ENCODE measurements at regions of chr3 and their contacts with region 1.

Region 1: DNA sequence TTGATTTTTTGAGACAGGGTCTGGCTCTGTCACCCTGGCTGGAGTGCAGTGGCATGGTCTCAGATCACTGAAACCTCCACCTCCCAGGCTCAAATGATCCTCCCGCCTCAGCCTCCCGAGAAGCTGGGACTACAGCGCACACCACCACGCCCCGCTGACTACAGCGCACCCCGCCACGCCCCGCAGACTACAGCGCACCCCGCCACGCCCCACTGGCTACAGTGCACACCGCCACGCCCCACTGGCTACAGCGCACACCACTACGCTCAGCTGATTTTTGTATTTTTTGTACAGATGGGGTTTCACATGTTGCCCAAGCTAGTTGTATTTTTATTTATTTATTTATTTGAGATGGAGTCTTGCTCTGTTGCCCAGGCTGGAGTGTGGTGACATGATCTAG is 35.6 kb downstream of the SLC51A start:
- DNase-seq: no peak
- ATAC-seq: no peak
- H3K4me3 ChIP-seq: no peak overlapping the region
- H3K27ac ChIP-seq: no peak overlapping the region
- H3K4me1 ChIP-seq: no peaks in the 10 kb centered on the region
- H3K27me3 ChIP-seq: no peaks in the 10 kb centered on the region
- CTCF ChIP-seq: no peak
- POLR2A ChIP-seq: no peak
- RAD21 ChIP-seq: no peak

Region 2: GRCh38 chr3:196432137-196432879 is 180.4 kb after region 1 on chr3 and contains the start of gene UBXN7:
- CTCF ChIA-PET with region 1: no interaction called
- POLR2A ChIA-PET with region 1: no interaction called
- dilution Hi-C with region 1: no loop called
- in situ Hi-C with region 1: no loop called
- intact Hi-C with region 1: loop called (anchors 5 kb)
- DNase-seq: peak; percentile 90
- ATAC-seq: peak; percentile 95
- H3K4me3 ChIP-seq: peak within 1 kb of the TSS; percentile 86
- H3K27ac ChIP-seq: peak within 1 kb of the TSS; percentile 82
- H3K4me1 ChIP-seq: peaks cover 3% of the 10 kb centered on the region
- H3K27me3 ChIP-seq: no peaks in the 10 kb centered on the region
- CTCF ChIP-seq: no peak
- POLR2A ChIP-seq: no peak
- RAD21 ChIP-seq: no peak
- total RNA-seq, gene UBXN7: 16.1 and 18.9 TPM in 2 replicates

Region 3: GRCh38 chr3:196502775-196503195 is 250.9 kb after region 1 on chr3:
- CTCF ChIA-PET with region 1: no interaction called
- POLR2A ChIA-PET with region 1: no interaction called
- dilution Hi-C with region 1: no loop called
- in situ Hi-C with region 1: no loop called
- intact Hi-C with region 1: loop called (anchors 5 kb)
- DNase-seq: peak; percentile 92
- ATAC-seq: peak; percentile 24
- H3K4me3 ChIP-seq: peak overlapping the region; percentile 87
- H3K27ac ChIP-seq: peak overlapping the region; percentile 94
- H3K4me1 ChIP-seq: peaks cover 2% of the 10 kb centered on the region; the same call in 1 of the 2 replicates
- H3K27me3 ChIP-seq: no peaks in the 10 kb centered on the region
- CTCF ChIP-seq: no peak
- POLR2A ChIP-seq: peak; percentile 71
- RAD21 ChIP-seq: no peak

Region 4: DNA sequence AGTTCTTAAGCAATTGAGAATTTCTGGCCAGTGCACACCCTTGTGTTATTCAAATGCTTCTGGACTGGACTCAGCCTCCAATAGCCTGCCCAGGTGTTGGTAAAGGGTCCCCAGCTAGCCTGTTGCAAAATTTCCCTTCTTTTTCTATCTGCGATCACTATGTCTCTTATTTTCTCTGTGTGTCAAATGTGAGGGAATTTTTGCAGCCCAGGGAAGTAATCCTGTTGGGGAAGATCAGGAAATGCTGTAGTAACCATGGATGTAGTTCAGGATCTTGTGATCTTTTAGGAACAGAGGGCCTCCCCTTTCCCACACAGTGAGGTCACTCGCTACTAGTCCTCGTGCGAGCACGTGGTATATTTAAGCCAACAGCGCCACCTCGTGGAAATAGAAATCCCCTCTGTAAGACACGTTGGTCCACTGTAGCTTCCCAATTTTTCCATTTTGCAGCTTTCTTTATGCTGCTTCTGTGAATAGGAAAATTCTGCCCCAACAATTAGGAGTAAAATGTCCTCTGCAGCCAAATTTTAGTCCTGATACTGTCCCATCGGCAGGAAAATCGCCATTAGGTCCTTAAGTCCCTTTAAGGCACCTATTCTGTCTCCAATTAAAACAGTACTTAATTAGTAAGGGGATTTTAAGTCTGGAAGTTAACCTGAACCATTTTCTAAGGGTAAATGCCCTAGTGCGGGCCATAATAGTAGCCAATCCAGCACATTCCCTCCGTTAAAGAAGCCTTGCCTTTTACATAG is 267.2 kb after region 1 on chr3:
- CTCF ChIA-PET with region 1: interaction called, 3 read pairs
- POLR2A ChIA-PET with region 1: no interaction called
- dilution Hi-C with region 1: no loop called
- in situ Hi-C with region 1: loop called (anchors 5 kb)
- intact Hi-C with region 1: loop called (anchors 1 kb)
- DNase-seq: peak; percentile 73
- ATAC-seq: peak; percentile 83
- H3K4me3 ChIP-seq: no peak overlapping the region
- H3K27ac ChIP-seq: no peak overlapping the region
- H3K4me1 ChIP-seq: no peaks in the 10 kb centered on the region
- H3K27me3 ChIP-seq: no peaks in the 10 kb centered on the region
- CTCF ChIP-seq: peak; percentile 74
- POLR2A ChIP-seq: no peak
- RAD21 ChIP-seq: peak; percentile 86

Region 5: DNA sequence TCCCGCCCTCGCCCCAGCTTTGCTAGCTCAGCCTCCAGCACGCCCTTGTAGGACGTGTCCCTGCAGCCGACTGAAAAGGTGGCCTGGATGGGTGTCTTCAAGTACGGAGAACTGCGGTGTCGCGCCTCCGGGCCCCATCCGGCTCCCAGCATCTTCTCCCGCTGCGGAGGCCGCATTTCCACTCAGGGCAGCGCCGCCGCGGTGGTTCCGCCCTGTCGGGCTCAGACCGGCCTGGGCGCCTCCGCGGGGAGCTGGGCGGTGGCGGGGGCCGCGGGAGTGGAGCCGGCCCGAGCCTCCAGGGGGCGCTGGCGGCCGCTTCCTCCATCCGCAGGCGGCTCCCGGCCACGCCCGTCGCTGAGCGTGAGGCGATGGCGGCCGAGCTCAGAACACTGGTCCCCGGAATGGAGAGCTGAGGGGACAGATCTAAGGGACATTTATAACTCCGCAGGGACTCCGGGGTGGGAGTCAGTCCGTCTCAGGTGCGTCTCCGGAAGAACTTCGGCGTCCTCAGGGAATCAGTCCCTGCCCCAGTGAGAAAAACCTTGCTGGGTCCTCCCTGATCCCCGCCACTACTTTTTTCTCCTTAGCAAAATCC is 276.8 kb after region 1 on chr3:
- CTCF ChIA-PET with region 1: interaction called, 3 read pairs
- POLR2A ChIA-PET with region 1: no interaction called
- dilution Hi-C with region 1: no loop called
- in situ Hi-C with region 1: loop called (anchors 5 kb)
- intact Hi-C with region 1: no loop called
- DNase-seq: peak; percentile 26
- ATAC-seq: peak; percentile 97
- H3K4me3 ChIP-seq: peak overlapping the region; percentile 44
- H3K27ac ChIP-seq: peak overlapping the region; percentile 39
- H3K4me1 ChIP-seq: 0 out of 2 replicates have a peak, but pooled peaks cover 2% of the 10 kb centered on the region
- H3K27me3 ChIP-seq: no peaks in the 10 kb centered on the region; the same call in 1 of the 2 replicates
- CTCF ChIP-seq: peak; percentile 71
- POLR2A ChIP-seq: no peak
- RAD21 ChIP-seq: peak; percentile 53

Region 6: GRCh38 chr3:196684548-196685407 is 432.9 kb after region 1 on chr3:
- CTCF ChIA-PET with region 1: interaction called, 3 read pairs
- POLR2A ChIA-PET with region 1: no interaction called
- dilution Hi-C with region 1: no loop called
- in situ Hi-C with region 1: loop called (anchors 5 kb)
- intact Hi-C with region 1: loop called (anchors 10 kb)
- DNase-seq: peak; percentile 47
- ATAC-seq: peak; percentile 76
- H3K4me3 ChIP-seq: no peak overlapping the region
- H3K27ac ChIP-seq: no peak overlapping the region
- H3K4me1 ChIP-seq: peaks cover 4% of the 10 kb centered on the region; the same call in 1 of the 2 replicates
- H3K27me3 ChIP-seq: peaks cover 8% of the 10 kb centered on the region
- CTCF ChIP-seq: peak; percentile 88
- POLR2A ChIP-seq: no peak
- RAD21 ChIP-seq: peak; percentile 88

Measured in IMR-90 (cell line).